Panc1 (cell line): ENCODE measurements at regions of chr5 and their contacts with region 1.

Region 1: GRCh38 chr5:23675456-23675855 is 168.0 kb downstream of the PRDM9 start:
- DNase-seq: no peak
- ATAC-seq: no peak
- H3K4me3 ChIP-seq: no peak overlapping the region
- H3K27ac ChIP-seq: no peak overlapping the region
- H3K4me1 ChIP-seq: no peaks in the 10 kb centered on the region
- H3K27me3 ChIP-seq: no peaks in the 10 kb centered on the region
- CTCF ChIP-seq: no peak

Region 2: DNA sequence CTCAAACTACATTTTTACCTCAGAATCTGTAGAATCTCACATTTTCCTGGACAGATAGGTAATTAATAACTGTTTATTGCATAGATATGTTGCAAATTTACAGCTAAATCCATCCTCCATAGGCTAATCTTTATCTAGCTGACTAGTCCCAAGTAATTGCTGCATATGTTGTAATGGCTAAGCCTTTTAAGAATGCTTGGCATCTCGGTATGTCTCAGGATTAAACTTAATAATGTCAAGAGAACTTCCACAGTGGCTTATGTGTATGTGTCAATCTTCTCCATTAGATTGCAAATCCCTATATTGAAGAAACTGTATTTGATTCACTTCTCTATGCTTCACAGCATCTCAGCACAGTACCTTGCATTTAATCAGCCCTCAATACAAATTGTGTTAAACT is 36.1 kb before region 1 on chr5:
- CTCF ChIA-PET with region 1: no interaction called
- POLR2A ChIA-PET with region 1: no interaction called
- in situ Hi-C with region 1: no loop called
- intact Hi-C with region 1: loop called (anchors 2 kb)
- DNase-seq: no peak
- ATAC-seq: no peak
- H3K4me3 ChIP-seq: no peak overlapping the region
- H3K27ac ChIP-seq: no peak overlapping the region
- H3K4me1 ChIP-seq: no peaks in the 10 kb centered on the region
- H3K27me3 ChIP-seq: no peaks in the 10 kb centered on the region
- CTCF ChIP-seq: no peak